Sciatic nerve (tissue), 2 donors: ENCODE measurements at regions of chr2 and their contacts with region 1.

Region 1: GRCh38 chr2:190534310-190535120 is at the start of gene NEMP2:
- DNase-seq: peak; percentile 86
- ATAC-seq: peak; percentile 83
- total RNA-seq, gene NEMP2: 5.6 TPM

Region 2: GRCh38 chr2:190328573-190329147 is 205.9 kb before region 1 on chr2:
- intact Hi-C with region 1: no loop called
- DNase-seq: no peak
- ATAC-seq: no peak

Region 3: GRCh38 chr2:190515687-190516086 is 18.8 kb before region 1 on chr2:
- intact Hi-C with region 1: no loop called
- DNase-seq: no peak
- ATAC-seq: no peak

Region 4: DNA sequence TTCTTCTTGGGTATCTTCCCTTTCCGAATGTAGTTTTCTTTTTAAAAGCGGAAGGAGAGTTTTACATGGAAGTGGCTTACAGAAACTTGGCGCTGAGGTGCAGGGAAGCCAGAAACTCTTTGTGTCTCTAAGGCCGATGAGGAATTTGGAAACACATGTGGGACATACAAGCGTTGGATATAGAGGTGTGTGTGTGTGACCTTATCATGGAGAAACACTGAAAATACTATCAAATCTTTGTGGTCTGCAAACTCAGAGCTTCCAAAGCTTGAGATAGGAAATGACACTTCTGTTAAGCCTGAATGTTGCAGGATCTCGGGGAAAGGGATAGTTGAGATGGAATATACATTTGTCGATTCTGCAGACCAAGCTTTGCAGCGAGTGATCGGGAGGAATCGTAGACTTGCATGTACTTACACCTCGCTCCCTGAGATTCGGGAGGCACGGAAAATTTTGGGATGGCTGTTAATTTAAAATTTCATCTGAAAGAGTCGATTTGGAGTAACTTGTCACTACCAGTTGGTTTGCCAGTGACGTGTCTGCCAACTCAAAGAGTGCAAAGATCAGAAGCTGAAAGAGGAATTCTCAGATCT is 115.4 kb after region 1 on chr2:
- intact Hi-C with region 1: loop called (anchors 10 kb)
- DNase-seq: no peak
- ATAC-seq: no peak

Region 5: GRCh38 chr2:190679813-190680591 is 145.5 kb after region 1 on chr2:
- intact Hi-C with region 1: no loop called
- DNase-seq: no peak
- ATAC-seq: peak; percentile 48